ENCODE measurements at regions of chr6 and their contacts with region 1.

Region 1: DNA sequence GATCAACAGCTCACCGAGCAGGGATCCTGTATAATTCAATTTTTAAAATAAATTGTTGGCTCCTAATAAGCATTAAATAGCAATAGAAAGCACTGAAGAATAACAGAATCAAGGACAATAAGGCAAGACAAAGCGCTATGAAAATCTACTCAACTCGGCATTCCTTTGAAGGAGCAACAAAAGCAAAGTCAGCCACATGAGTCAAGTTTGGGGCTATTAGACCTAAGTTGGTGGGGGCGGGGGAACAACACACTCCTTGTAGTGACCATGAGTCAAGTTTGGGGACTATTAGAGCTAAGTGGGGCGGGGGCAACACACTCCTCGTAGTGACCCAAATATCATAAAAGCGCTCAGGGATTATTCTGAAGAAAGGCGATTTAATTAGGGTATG is 120.0 kb downstream of the FOXC1 start:
- DNase-seq: no peak
- ATAC-seq: no peak
- H3K4me3 ChIP-seq: no peak overlapping the region
- H3K27ac ChIP-seq: no peak overlapping the region
- H3K4me1 ChIP-seq: peaks cover 0 to 6% (median 0%) of the 10 kb centered on the region in 9 donors
- H3K27me3 ChIP-seq: no peaks in the 10 kb centered on the region
- CTCF ChIP-seq: no peak

Region 2: GRCh38 chr6:1604158-1605030 is 125.4 kb before region 1 on chr6:
- intact Hi-C with region 1: no loop called
- DNase-seq: peak in 1 of 2 donors; percentile 80
- ATAC-seq: peak; percentile 90 to 94 (median 92)
- H3K4me3 ChIP-seq: peak overlapping the region; percentile 0 to 66 (median 58)
- H3K27ac ChIP-seq: no peak overlapping the region
- H3K4me1 ChIP-seq: peaks cover 3 to 46% (median 22%) of the 10 kb centered on the region in 9 donors
- H3K27me3 ChIP-seq: peaks cover 16 to 99% (median 79%) of the 10 kb centered on the region in 7 donors
- CTCF ChIP-seq: peak; percentile 89 to 99 (median 98)

Region 3: DNA sequence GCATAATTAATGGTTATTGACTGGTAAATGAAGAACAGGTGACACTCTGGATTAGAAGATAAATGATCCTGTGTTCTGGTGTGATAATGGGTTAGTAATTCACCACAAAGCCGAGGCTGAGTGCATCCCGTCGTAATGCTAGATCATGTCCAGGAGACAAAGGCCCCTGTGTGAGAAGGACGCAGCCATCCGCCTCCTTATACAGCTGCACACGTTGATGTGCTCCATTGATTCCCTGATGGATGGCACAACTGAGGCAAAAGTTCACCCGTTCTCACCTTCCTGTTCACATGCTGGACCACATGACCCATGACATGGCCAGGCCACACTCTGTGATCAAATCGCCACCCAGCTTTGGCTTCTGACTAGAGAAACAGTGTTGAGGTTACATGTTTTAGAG is 16.1 kb after region 1 on chr6:
- intact Hi-C with region 1: loop called in 1 of 10 experiments (anchors 2 kb)
- DNase-seq: no peak
- ATAC-seq: no peak
- H3K4me3 ChIP-seq: no peak overlapping the region
- H3K27ac ChIP-seq: no peak overlapping the region
- H3K4me1 ChIP-seq: no peaks in the 10 kb centered on the region
- H3K27me3 ChIP-seq: no peaks in the 10 kb centered on the region
- CTCF ChIP-seq: no peak